CD4-positive, alpha-beta T cell (primary cell): ENCODE measurements at regions of chr10 and their contacts with region 1.

Region 1: DNA sequence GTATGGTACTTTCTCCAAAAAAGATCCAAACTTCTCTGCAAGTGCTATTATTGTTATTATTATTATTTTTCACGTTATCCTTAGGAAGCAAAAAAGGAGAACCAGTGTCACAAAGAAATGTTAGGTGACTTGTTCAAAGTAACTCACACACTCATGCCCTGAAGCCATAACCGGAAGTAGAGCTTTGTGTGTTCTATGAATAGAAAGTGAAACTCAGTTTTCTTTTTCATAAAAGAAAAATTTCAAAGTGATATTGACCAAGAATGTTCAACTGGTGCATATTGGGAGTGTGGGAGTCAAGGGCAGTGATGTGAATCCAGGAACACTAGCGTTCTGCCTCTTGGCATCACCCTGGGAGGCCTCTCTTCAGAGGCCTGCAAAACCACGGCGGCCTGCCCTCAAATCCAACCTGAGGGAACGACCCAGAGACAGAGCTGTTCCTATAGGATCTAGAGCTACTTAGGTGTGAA is 106.1 kb downstream of the PRKCQ start:
- DNase-seq: peak in 6 of 14 experiments; percentile 25 to 85 (median 56)
- ATAC-seq: peak; percentile 75
- H3K4me3 ChIP-seq: peak overlapping the region; percentile 47
- H3K4me3 Mint-ChIP-seq: peak overlapping the region; percentile 83
- H3K27ac ChIP-seq: peak overlapping the region; percentile 69 to 75
- H3K27ac Mint-ChIP-seq: peak overlapping the region; percentile 95
- H3K4me1 ChIP-seq: peaks cover 23% of the 10 kb centered on the region
- H3K4me1 Mint-ChIP-seq: peaks cover 65% of the 10 kb centered on the region
- H3K27me3 ChIP-seq: no peaks in the 10 kb centered on the region
- H3K27me3 Mint-ChIP-seq: no peaks in the 10 kb centered on the region
- CTCF ChIP-seq: no peak

Region 2: GRCh38 chr10:6171881-6172695 is 301.8 kb before region 1 on chr10:
- CTCF ChIA-PET with region 1: no interaction called
- POLR2A ChIA-PET with region 1: no interaction called
- intact Hi-C with region 1: no loop called
- DNase-seq: peak in 4 of 14 experiments; percentile 15 to 76 (median 57)
- ATAC-seq: no peak
- H3K4me3 ChIP-seq: no peak overlapping the region
- H3K4me3 Mint-ChIP-seq: peak overlapping the region; percentile 18
- H3K27ac ChIP-seq: no peak overlapping the region
- H3K27ac Mint-ChIP-seq: peak overlapping the region; percentile 83
- H3K4me1 ChIP-seq: peaks cover 84% of the 10 kb centered on the region
- H3K4me1 Mint-ChIP-seq: peaks cover 85% of the 10 kb centered on the region
- H3K27me3 ChIP-seq: no peaks in the 10 kb centered on the region
- H3K27me3 Mint-ChIP-seq: no peaks in the 10 kb centered on the region
- CTCF ChIP-seq: no peak

Region 3: GRCh38 chr10:6498771-6499170 is 24.8 kb after region 1 on chr10:
- CTCF ChIA-PET with region 1: interaction called, 12 read pairs
- POLR2A ChIA-PET with region 1: interaction called, 13 read pairs
- intact Hi-C with region 1: loop called (anchors 2 kb)
- DNase-seq: peak in 8 of 14 experiments; percentile 17 to 91 (median 47)
- ATAC-seq: peak; percentile 75
- H3K4me3 ChIP-seq: no peak overlapping the region
- H3K4me3 Mint-ChIP-seq: peak overlapping the region; percentile 55
- H3K27ac ChIP-seq: peak overlapping the region; percentile 55 to 63
- H3K27ac Mint-ChIP-seq: peak overlapping the region; percentile 90
- H3K4me1 ChIP-seq: peaks cover 41% of the 10 kb centered on the region
- H3K4me1 Mint-ChIP-seq: peaks cover 42% of the 10 kb centered on the region
- H3K27me3 ChIP-seq: no peaks in the 10 kb centered on the region
- H3K27me3 Mint-ChIP-seq: no peaks in the 10 kb centered on the region
- CTCF ChIP-seq: no peak

Region 4: DNA sequence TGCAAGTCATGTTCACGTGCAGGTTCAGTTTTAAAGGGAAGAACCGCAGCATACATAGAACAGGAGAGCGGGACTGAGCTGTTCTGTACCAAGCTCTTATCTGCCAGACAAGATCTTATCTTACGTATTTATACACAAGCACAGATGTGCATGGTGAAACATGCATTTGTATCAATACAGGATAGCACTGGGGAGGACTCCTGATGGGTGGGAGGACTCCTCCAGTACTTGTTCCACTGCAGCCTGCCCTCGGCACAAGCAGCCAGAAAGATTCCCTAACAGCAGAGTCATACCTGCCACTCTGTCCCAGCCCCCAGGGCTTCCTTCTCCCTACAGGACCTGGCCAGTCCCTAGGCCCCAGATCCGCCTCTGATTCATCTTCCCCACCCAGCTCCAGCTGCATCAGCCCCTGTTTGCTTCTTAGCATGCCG is 119.3 kb after region 1 on chr10:
- CTCF ChIA-PET with region 1: interaction called, 7 read pairs
- POLR2A ChIA-PET with region 1: interaction called, 13 read pairs
- intact Hi-C with region 1: no loop called
- DNase-seq: peak in 5 of 14 experiments; percentile 16 to 64 (median 50)
- ATAC-seq: peak; percentile 67
- H3K4me3 ChIP-seq: no peak overlapping the region
- H3K4me3 Mint-ChIP-seq: peak overlapping the region; percentile 66
- H3K27ac ChIP-seq: peak overlapping the region; percentile 79 to 83
- H3K27ac Mint-ChIP-seq: peak overlapping the region; percentile 94
- H3K4me1 ChIP-seq: peaks cover 54% of the 10 kb centered on the region
- H3K4me1 Mint-ChIP-seq: peaks cover 97% of the 10 kb centered on the region
- H3K27me3 ChIP-seq: no peaks in the 10 kb centered on the region
- H3K27me3 Mint-ChIP-seq: no peaks in the 10 kb centered on the region
- CTCF ChIP-seq: no peak